PC-9 (cell line): ENCODE measurements at regions of chr2 and their contacts with region 1.

Region 1: DNA sequence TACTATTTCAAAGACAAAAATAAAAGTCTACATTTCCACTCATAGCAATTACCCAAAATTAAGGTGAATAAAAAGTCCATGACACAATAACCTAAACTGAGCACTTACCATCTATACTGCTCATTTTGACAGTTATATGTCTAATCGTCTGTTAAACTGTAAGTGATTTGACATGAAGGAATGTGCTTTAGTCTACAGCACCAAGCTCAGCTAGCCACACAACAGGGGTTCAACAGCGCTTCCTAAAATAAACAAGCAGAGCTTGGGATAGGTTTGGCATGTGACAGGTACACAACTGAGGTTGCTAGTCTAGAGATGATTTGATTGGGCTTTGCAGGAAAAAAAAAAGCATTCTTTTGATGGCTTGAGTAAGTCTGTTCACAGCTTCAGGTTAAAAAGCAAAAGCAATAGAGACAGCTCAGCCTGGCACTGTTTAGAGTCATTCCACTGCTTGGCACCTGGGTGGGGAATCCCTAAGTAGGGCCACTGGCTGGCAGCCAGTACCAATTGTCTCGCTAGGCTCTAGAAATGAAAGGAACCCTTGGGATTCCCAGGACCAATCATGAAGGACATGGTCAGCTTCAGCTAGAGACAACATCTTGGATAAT is 78.6 kb downstream of the BARD1 start:
- DNase-seq: no peak
- H3K4me3 ChIP-seq: no peak overlapping the region
- H3K27ac ChIP-seq: no peak overlapping the region
- H3K4me1 ChIP-seq: no peaks in the 10 kb centered on the region
- H3K27me3 ChIP-seq: no peaks in the 10 kb centered on the region
- CTCF ChIP-seq: no peak

Region 2: GRCh38 chr2:214156971-214157370 is 573.9 kb before region 1 on chr2:
- CTCF ChIA-PET with region 1: no interaction called
- POLR2A ChIA-PET with region 1: no interaction called
- intact Hi-C with region 1: no loop called
- DNase-seq: no peak
- H3K4me3 ChIP-seq: no peak overlapping the region
- H3K27ac ChIP-seq: no peak overlapping the region
- H3K4me1 ChIP-seq: no peaks in the 10 kb centered on the region
- H3K27me3 ChIP-seq: no peaks in the 10 kb centered on the region
- CTCF ChIP-seq: no peak

Region 3: GRCh38 chr2:215487005-215487378 is 756.1 kb after region 1 on chr2:
- CTCF ChIA-PET with region 1: no interaction called
- POLR2A ChIA-PET with region 1: interaction called, 15 read pairs
- intact Hi-C with region 1: no loop called
- DNase-seq: no peak
- H3K4me3 ChIP-seq: no peak overlapping the region
- H3K27ac ChIP-seq: no peak overlapping the region
- H3K4me1 ChIP-seq: no peaks in the 10 kb centered on the region
- H3K27me3 ChIP-seq: no peaks in the 10 kb centered on the region
- CTCF ChIP-seq: no peak